ENCODE measurements at regions of chr20 and their contacts with region 1.

Region 1: GRCh38 chr20:5001174-5002076 is at the start of gene SLC23A2:
- DNase-seq: peak; percentile 66
- H3K4me3 ChIP-seq: peak within 1 kb of the TSS; percentile 90
- H3K27ac ChIP-seq: no peak within 1 kb of the TSS
- H3K4me1 ChIP-seq: peaks cover 42% of the 10 kb centered on the region
- CTCF ChIP-seq: no peak
- total RNA-seq, gene SLC23A2: 12.7 and 14.3 TPM in 2 replicates

Region 2: GRCh38 chr20:4985658-4986057 is 15.8 kb before region 1 on chr20:
- CTCF ChIA-PET with region 1: no interaction called
- POLR2A ChIA-PET with region 1: interaction called, 10 read pairs
- intact Hi-C with region 1: loop called (anchors 1 kb)
- DNase-seq: peak; percentile 76
- H3K4me3 ChIP-seq: peak overlapping the region; percentile 35
- H3K27ac ChIP-seq: peak overlapping the region; percentile 89
- H3K4me1 ChIP-seq: peaks cover 64% of the 10 kb centered on the region
- CTCF ChIP-seq: no peak

Region 3: DNA sequence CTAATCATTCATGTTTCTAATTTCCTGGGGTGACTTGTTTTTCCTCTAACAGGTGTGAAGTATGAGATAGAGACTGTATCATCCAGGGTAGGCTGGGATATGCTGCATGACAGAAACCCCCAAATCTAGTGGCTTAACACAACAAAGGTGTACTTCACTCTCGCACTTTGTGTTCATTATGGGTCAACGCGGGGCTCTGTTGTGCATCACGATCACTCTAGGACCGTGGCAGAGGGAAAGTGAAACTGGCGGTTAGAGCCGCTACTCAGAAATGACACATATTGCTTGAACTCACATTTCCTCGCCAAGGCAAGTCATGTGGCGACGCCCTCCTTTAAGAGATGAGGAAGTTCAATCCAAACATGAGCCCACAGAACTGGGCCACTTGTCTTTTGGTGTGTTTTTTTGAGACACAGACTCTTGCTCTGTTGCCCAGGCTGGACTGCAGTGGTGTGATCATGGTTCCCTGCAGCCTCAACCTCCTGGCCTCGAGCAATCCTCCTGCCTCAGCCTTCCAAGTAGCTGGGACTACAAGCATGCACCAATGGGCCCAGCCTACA is 77.1 kb after region 1 on chr20:
- CTCF ChIA-PET with region 1: no interaction called
- POLR2A ChIA-PET with region 1: no interaction called
- intact Hi-C with region 1: loop called (anchors 2 kb)
- DNase-seq: peak; percentile 90
- H3K4me3 ChIP-seq: peak overlapping the region; percentile 53
- H3K27ac ChIP-seq: peak overlapping the region; percentile 77
- H3K4me1 ChIP-seq: peaks cover 57% of the 10 kb centered on the region
- CTCF ChIP-seq: no peak

Region 4: DNA sequence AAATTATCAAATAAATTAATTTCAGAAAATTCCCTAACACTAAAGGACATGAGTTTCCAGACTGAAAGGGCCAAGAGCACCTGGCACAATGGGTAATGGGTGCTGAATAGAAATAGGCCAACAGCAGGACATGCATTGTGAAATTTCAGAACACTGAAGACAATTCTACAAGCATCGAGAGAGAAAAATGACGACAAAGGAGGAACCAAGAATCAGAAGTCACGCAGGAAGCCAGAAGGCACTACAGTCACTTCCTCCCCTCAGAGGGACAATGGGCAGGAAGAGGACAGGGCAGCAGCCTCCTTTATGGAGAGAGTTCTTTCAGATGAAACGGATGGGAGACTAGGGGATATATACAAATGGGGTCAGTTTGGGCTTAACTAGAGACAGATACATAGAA is 88.8 kb after region 1 on chr20:
- CTCF ChIA-PET with region 1: no interaction called
- POLR2A ChIA-PET with region 1: no interaction called
- intact Hi-C with region 1: loop called (anchors 5 kb)
- DNase-seq: peak; percentile 60
- H3K4me3 ChIP-seq: no peak overlapping the region
- H3K27ac ChIP-seq: peak overlapping the region; percentile 35
- H3K4me1 ChIP-seq: peaks cover 47% of the 10 kb centered on the region
- CTCF ChIP-seq: no peak

Measured in OCI-LY7 (cell line).